ENCODE measurements at regions of chr5 and their contacts with region 1.

Region 1: GRCh38 chr5:159987031-159987674 is 21.8 kb upstream of the TTC1 start:
- DNase-seq: peak; percentile 88
- ATAC-seq: peak; percentile 94
- H3K4me3 Mint-ChIP-seq: peak overlapping the region; percentile 64
- H3K27ac Mint-ChIP-seq: no peak overlapping the region
- H3K4me1 Mint-ChIP-seq: 0 out of 2 replicates have a peak, but pooled peaks cover 3% of the 10 kb centered on the region
- H3K27me3 Mint-ChIP-seq: peaks cover 51% of the 10 kb centered on the region
- CTCF ChIP-seq: peak; percentile 39; the same call in 1 of the 2 replicates

Region 2: DNA sequence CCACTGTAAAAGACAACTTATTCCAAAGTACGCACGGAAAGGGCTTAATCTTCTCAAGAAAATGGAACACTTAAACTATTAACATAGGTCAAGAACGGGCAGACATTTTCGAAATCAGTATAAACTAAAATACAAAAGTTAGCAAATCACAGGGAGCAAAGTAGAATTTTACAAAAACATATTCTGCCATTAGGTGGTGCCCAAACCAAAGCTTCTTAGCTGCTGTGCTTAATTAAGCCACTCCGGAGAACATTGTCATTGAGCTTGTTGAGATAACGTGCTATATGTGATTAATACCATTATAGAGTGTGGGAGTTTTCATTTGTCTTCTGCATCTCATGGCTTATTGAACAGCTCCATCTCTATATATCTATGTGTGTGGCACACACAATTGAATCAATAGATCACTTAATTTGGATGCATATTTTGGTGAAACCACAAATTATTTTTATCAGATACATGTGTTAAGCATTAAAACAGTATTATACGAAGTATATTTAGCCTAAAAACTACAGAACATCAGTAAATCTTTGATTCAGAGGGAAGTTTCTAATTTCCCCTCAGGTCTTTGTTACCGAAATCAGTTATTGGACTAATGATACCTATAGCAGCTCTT is 700.6 kb before region 1 on chr5:
- CTCF ChIA-PET with region 1: interaction called, 12 read pairs
- POLR2A ChIA-PET with region 1: no interaction called
- DNase-seq: no peak
- ATAC-seq: no peak
- H3K4me3 Mint-ChIP-seq: no peak overlapping the region
- H3K27ac Mint-ChIP-seq: no peak overlapping the region
- H3K4me1 Mint-ChIP-seq: peaks cover 4% of the 10 kb centered on the region
- H3K27me3 Mint-ChIP-seq: no peaks in the 10 kb centered on the region
- CTCF ChIP-seq: no peak

Region 3: GRCh38 chr5:159444441-159445082 is 542.6 kb before region 1 on chr5:
- CTCF ChIA-PET with region 1: interaction called, 70 read pairs
- POLR2A ChIA-PET with region 1: no interaction called
- DNase-seq: no peak
- ATAC-seq: peak; percentile 35
- H3K4me3 Mint-ChIP-seq: no peak overlapping the region
- H3K27ac Mint-ChIP-seq: no peak overlapping the region
- H3K4me1 Mint-ChIP-seq: peaks cover 17% of the 10 kb centered on the region
- H3K27me3 Mint-ChIP-seq: no peaks in the 10 kb centered on the region
- CTCF ChIP-seq: no peak

Region 4: DNA sequence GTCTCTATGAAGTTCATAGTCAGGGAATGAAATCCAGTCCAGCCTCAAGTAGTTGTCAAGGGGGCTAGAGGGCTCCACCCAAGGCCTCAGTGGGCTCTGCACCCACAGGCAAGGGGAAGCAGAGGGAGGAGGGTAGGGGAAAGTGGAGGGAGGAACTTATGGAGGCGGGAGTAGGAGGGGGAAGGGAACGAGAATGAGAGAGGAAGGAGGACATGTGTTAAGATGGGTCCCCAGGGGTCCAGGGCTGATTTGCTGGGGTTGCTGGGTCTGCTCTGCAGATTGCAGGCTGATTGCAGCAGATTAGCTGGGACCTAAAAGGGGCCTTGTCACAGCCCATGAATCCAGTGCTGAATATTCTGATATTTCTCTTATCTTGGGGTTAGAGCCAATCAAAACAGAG is 489.9 kb before region 1 on chr5:
- CTCF ChIA-PET with region 1: no interaction called
- POLR2A ChIA-PET with region 1: no interaction called
- DNase-seq: no peak
- ATAC-seq: peak; percentile 64
- H3K4me3 Mint-ChIP-seq: no peak overlapping the region
- H3K27ac Mint-ChIP-seq: no peak overlapping the region
- H3K4me1 Mint-ChIP-seq: peaks cover 5% of the 10 kb centered on the region
- H3K27me3 Mint-ChIP-seq: no peaks in the 10 kb centered on the region; the same call in 1 of the 2 replicates
- CTCF ChIP-seq: no peak

Region 5: DNA sequence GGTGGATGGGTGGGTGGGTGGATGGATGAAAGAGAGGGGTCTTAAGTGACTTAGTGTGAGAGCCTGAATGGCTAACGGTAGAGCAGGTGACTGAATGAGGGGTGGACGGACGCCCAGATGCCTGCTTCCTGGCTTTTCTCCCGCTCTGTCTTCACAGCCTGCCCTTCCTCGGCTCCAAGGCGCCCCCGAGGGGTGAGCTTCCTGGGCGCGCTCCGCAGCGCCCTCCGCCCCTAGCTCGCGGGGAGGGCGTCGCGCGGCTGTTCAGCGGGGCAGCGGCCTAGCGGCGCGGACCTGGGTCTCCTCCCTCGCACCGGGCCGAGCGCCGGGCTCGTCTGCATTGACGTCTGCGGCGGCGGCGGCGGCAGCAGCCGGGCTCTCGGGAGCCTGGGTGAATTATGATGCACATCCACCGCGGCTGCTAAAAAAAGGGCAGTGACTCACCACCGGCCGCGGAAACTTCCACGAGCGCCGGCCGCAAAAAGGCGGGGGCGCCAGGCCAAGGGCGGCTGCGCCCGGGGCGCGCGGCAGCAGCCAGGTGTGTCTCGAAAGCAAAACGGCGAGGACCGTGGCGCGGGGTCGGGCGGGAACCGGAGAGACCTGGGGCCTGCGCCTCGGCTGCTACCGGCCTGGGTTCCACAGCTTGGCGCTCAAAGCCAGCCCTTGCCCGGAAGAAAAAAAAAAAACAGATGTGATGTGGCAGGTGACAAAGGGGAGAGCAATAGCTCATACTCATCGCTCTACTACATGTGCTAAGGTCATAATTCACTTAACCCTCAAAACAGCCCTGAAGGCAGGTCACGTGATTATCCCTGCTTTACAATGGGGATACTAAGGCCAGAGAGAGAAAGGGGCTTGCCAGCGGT is 213.9 kb before region 1 on chr5:
- CTCF ChIA-PET with region 1: interaction called, 12 read pairs
- POLR2A ChIA-PET with region 1: no interaction called
- DNase-seq: peak; percentile 60
- ATAC-seq: peak; percentile 57
- H3K4me3 Mint-ChIP-seq: peak overlapping the region; percentile 54
- H3K27ac Mint-ChIP-seq: peak overlapping the region; percentile 36; the same call in 1 of the 2 replicates
- H3K4me1 Mint-ChIP-seq: peaks cover 41% of the 10 kb centered on the region
- H3K27me3 Mint-ChIP-seq: peaks cover 11% of the 10 kb centered on the region
- CTCF ChIP-seq: no peak

Region 6: DNA sequence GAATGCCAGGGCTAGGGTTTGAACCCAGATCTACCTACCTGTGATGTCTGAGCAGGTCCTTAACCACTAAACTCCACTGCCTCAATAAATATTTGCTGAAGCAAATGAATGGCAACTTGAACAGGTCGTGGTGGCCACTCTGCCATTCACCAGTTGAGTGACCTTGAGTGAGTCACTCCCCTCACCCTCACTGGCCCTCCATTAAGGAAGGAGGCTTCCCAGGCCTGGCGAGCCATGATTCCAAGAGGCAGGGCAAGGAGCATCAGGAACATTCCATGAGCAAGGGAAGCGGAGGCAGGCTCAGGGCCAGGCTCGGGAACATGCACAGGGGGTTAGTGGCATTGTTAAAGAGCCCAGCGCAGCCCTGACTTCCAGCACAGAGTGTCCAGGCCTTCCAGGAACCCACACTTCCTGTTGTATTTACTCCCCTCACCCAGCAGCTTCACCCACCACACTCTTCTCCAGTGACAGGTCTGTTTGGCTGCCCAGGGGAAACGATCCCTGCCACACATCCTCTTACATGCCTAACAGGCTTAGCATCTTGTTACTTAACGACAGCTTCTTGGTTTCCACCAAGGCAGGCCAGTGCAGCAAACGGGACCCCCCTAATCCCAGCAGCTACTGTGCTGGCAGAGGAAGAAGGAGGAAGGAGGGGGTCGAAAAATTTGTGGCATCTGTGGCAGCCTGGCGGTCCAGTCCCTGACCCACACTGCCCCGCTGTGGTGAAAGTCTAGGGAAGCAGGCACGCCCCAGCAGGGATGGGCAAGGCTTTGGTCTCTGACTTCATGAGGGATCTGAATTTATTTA is 21.9 kb before region 1 on chr5:
- CTCF ChIA-PET with region 1: interaction called, 15 read pairs
- POLR2A ChIA-PET with region 1: no interaction called
- DNase-seq: peak; percentile 82
- ATAC-seq: peak; percentile 98
- H3K4me3 Mint-ChIP-seq: no peak overlapping the region
- H3K27ac Mint-ChIP-seq: no peak overlapping the region
- H3K4me1 Mint-ChIP-seq: no peaks in the 10 kb centered on the region; the same call in 1 of the 2 replicates
- H3K27me3 Mint-ChIP-seq: peaks cover 11% of the 10 kb centered on the region
- CTCF ChIP-seq: peak; percentile 43

Region 7: DNA sequence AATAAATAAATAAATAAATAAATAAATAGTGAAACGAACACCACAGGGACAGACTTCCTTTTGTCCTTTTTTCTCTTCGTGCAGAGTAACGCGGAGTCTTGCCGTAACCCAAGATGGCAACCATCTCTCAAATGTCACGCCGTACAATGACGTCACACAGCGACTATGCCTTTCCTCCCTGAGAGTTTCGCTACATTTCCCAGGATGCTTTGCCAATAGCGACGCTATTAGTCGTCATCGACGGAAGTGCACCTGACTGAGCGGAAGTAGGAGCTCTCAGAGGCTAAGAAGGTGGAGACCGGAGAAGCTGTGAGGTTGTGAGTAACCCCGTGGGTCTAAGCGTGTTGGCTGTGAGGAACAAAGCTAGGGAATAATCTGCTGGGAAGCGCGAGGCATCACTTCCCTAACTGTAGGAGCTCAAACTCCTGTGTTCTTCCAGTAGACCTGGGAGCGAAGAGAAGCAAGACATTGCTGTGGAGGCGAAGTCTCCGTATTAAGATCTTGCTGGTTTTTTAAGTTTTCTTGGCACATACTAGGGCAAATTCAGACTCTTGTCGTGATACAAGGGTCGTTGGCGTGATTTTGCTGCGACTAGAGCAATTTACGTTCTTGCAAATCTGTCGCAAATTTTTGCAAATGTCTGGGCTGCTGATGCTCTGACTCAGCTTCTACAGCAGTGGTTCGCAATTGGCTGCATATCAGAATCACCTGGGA is 21.9 kb after region 1 on chr5 and contains the start of gene TTC1:
- CTCF ChIA-PET with region 1: interaction called, 10 read pairs
- POLR2A ChIA-PET with region 1: no interaction called
- DNase-seq: peak; percentile 90
- ATAC-seq: peak; percentile 95
- H3K4me3 Mint-ChIP-seq: peak within 1 kb of the TSS; percentile 100
- H3K27ac Mint-ChIP-seq: peak within 1 kb of the TSS; percentile 99
- H3K4me1 Mint-ChIP-seq: peaks cover 12% of the 10 kb centered on the region
- H3K27me3 Mint-ChIP-seq: no peaks in the 10 kb centered on the region
- CTCF ChIP-seq: no peak
- total RNA-seq, gene TTC1: 46.4 to 48.3 TPM (median 47.4 TPM) in 3 replicates